Activated CD4-positive, alpha-beta T cell treated with anti-CD3 and anti-CD28 coated beads, Interleukin-2, amount 10 ng/mL, durations not matched to agents 24 days and 14 days (primary cell): ENCODE measurements at regions of chr11 and their contacts with region 1.

Region 1: DNA sequence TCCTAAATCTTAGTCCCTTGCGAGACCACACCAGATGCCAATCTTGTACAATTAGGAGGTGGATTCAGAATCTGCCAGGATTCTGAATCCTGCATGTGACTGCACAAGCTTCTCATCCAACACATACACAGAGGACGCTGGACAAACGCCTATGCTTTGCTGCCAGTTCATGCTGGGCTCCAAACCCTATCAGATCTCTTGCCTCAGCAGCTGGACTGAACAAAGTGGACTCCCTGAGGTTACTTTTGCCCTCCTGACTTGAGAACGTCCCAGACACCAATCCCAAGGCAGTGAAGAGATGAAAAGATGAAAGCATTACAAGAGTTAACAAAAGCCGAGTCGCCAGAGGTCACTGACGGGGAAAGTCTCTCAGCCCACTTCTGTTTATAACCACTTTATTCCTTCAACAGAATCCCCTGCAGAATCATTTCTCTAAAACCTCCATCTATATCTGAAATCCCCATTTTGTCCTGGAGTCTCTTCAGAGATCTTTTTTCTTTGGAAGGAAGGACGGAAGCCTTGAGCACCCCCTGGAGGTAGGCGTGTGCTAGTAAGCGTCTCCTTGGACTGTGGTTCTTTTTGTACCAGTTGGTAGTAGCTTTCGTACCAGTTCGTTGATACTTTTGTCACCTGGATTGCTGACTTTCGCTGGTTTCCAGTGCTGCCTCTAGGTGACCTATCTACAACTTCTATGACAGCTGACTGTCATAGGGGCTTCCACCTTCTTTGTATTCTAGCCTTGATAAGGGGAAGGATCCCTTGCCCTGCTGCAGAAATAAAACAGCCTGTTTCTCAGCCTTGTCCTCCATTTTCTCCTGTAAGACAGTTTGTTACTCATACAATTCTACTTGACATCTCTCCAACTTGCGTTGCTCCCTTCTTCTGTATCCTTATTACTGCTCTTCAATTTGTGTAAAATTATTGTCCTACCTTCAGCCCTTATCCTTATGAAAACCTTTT is 26.1 kb upstream of the EED start:
- DNase-seq: peak; percentile 89
- H3K4me3 Mint-ChIP-seq: peak overlapping the region; percentile 70
- H3K27ac Mint-ChIP-seq: peak overlapping the region; percentile 84
- H3K4me1 Mint-ChIP-seq: peaks cover 59% of the 10 kb centered on the region
- H3K27me3 Mint-ChIP-seq: no peaks in the 10 kb centered on the region

Region 2: GRCh38 chr11:85663753-85664614 is 554.4 kb before region 1 on chr11:
- intact Hi-C with region 1: no loop called
- DNase-seq: peak; percentile 97
- H3K4me3 Mint-ChIP-seq: peak overlapping the region; percentile 97
- H3K27ac Mint-ChIP-seq: peak overlapping the region; percentile 99
- H3K4me1 Mint-ChIP-seq: peaks cover 33% of the 10 kb centered on the region
- H3K27me3 Mint-ChIP-seq: peaks cover 2% of the 10 kb centered on the region

Region 3: DNA sequence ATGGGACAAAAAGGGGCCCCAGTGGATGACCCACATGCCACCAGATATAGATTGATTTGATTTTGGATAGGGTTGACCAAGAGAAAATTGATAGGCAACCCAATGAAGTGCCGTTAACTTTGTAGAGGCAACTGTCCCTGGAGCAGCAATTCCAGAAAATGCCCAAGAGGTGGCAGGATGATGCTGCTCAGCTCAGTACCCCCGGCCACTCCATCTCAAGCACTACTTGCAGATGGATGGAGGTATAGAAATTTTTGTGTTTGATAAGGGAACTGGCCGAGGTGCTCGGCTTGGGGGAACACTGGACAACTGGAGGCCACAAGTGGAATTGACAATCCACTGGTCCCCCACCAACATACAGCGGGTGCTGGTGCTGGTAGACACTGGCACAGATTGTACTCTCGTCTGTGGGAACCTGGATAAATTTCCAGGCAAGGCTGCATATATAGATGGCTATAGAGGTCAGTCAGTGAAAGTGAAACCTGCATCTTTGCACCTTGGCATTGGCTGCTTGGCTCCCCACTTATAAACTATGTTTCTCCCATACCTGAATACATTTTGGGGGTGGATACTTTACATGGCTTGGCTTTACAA is 276.9 kb before region 1 on chr11:
- intact Hi-C with region 1: loop called (anchors 2 kb)
- DNase-seq: peak; percentile 77
- H3K4me3 Mint-ChIP-seq: no peak overlapping the region
- H3K27ac Mint-ChIP-seq: no peak overlapping the region
- H3K4me1 Mint-ChIP-seq: peaks cover 13% of the 10 kb centered on the region
- H3K27me3 Mint-ChIP-seq: no peaks in the 10 kb centered on the region

Region 4: DNA sequence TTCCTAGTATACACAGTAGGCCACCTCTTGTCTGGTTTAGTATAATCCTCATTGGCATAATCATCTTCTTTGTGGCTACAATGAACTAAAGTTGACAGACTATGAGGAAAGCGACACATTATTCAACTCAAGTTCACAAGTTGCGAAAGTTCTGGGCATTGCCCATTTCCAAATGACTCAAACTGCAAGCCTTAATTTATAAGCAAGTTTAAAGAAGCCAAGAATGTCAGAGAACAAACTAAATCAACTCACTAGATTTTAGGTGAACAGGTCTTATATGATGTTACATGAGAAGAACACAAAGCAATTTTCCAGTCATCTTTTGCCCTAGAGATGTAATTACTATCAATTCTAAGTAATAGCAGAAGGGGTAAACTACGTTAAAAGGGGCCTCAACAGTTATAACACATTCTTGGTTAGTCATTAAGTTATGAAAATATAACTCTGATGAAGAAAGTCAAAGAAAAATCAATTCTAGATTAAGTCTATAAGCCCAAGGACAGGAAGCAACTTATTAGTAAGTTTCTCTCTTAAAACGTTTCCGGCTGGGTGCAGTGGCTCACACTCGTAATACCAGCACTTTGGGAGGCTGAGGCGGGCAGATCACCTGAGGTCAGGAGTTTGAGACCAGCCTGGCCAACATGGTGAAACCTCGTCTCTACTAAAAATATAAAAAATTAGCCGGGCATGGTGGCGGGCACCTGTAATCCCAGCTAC is 171.0 kb before region 1 on chr11:
- intact Hi-C with region 1: loop called (anchors 1 kb)
- DNase-seq: peak; percentile 64
- H3K4me3 Mint-ChIP-seq: peak overlapping the region; percentile 57
- H3K27ac Mint-ChIP-seq: peak overlapping the region; percentile 96
- H3K4me1 Mint-ChIP-seq: peaks cover 72% of the 10 kb centered on the region
- H3K27me3 Mint-ChIP-seq: no peaks in the 10 kb centered on the region

Region 5: DNA sequence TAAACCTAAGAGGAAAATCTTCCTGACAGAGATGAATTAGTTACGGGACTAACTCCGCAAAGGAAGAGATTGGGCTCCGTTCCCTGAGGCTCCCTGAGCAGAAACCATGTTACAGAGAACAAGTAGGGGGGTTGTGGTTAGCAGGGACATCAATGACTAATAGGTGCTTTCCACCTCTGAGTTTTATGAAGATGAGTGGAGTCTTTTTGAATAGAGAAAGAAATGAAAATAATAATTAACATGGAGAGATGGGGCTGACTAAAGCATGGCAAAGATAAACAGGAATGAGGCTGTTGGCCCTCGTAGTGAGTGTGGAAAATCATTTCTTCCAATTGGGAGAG is 102.0 kb before region 1 on chr11:
- intact Hi-C with region 1: loop called (anchors 1 kb)
- DNase-seq: peak; percentile 70
- H3K4me3 Mint-ChIP-seq: peak overlapping the region; percentile 24
- H3K27ac Mint-ChIP-seq: peak overlapping the region; percentile 69
- H3K4me1 Mint-ChIP-seq: peaks cover 30% of the 10 kb centered on the region
- H3K27me3 Mint-ChIP-seq: peaks cover 2% of the 10 kb centered on the region

Region 6: GRCh38 chr11:86202013-86202336 is 16.4 kb before region 1 on chr11:
- intact Hi-C with region 1: loop called (anchors 1 kb)
- DNase-seq: peak; percentile 70
- H3K4me3 Mint-ChIP-seq: no peak overlapping the region
- H3K27ac Mint-ChIP-seq: no peak overlapping the region
- H3K4me1 Mint-ChIP-seq: peaks cover 14% of the 10 kb centered on the region
- H3K27me3 Mint-ChIP-seq: no peaks in the 10 kb centered on the region

Region 7: DNA sequence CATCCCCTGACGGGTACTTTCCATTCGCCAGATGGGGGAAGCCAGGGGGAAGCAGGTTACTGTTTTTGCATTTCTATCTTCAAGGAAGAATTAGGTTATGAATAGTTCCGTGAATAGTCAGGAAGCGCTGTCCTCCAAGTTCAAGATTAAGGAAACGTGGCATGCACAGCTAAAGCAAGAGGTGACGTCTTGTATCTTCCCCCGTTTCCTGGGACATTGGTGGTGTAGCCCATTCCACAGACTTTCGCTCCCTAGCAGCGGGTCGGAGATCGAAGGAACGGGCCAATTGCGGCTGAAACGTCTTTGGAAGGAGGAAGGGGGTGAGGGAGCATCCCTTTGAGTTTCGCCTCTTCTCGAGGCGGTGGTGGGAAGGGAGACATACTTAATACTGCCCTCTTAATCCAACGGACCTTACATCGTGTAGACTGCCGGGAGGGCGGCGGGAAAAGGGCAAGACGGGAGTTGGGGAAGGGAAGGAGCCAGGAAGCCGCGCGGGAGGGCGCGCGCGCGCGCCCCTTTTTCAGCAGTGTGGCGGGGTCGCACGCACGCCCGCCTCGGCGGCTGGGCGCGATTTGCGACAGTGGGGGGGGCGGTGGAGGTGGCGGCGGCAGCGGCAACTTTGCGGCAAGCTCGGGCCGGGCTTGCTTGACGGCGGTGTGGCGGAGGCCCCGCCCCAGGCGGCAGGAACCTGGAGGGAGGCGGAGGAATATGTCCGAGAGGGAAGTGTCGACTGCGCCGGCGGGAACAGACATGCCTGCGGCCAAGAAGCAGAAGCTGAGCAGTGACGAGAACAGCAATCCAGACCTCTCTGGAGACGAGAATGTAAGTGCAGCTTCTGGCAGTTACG is 26.3 kb after region 1 on chr11 and contains the start of gene EED:
- intact Hi-C with region 1: loop called (anchors 1 kb)
- DNase-seq: peak; percentile 98
- H3K4me3 Mint-ChIP-seq: no peak within 1 kb of the TSS
- H3K27ac Mint-ChIP-seq: no peak within 1 kb of the TSS
- H3K4me1 Mint-ChIP-seq: peaks cover 34% of the 10 kb centered on the region
- H3K27me3 Mint-ChIP-seq: no peaks in the 10 kb centered on the region
- total RNA-seq, gene EED: 269 TPM in 2 replicates

Region 8: DNA sequence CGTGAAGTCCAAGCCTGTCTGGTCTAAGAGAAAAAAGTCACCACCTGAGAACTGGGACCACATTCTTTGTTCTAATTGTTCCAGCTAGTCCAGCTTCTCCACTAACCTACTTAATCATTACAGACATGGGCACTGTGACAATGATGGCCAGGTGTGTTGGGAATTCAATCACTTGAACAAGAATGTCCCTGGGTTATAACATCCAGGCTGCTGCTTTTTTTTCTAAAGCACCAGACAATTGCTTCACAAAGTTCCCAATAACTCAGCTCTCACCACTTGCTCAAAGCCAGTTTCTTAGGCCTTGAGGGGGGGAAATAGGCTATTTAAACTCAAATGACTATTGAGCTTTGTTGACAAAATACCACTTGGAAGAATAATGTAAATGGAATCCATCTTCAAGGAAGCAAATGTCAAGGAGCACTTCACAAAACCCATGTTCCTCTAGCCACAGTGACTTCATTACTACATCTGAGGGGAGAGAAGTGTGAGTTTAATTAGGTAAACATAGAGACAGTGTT is 373.7 kb after region 1 on chr11:
- intact Hi-C with region 1: no loop called
- DNase-seq: no peak
- H3K4me3 Mint-ChIP-seq: no peak overlapping the region
- H3K27ac Mint-ChIP-seq: peak overlapping the region; percentile 90
- H3K4me1 Mint-ChIP-seq: peaks cover 49% of the 10 kb centered on the region
- H3K27me3 Mint-ChIP-seq: no peaks in the 10 kb centered on the region

Region 9: DNA sequence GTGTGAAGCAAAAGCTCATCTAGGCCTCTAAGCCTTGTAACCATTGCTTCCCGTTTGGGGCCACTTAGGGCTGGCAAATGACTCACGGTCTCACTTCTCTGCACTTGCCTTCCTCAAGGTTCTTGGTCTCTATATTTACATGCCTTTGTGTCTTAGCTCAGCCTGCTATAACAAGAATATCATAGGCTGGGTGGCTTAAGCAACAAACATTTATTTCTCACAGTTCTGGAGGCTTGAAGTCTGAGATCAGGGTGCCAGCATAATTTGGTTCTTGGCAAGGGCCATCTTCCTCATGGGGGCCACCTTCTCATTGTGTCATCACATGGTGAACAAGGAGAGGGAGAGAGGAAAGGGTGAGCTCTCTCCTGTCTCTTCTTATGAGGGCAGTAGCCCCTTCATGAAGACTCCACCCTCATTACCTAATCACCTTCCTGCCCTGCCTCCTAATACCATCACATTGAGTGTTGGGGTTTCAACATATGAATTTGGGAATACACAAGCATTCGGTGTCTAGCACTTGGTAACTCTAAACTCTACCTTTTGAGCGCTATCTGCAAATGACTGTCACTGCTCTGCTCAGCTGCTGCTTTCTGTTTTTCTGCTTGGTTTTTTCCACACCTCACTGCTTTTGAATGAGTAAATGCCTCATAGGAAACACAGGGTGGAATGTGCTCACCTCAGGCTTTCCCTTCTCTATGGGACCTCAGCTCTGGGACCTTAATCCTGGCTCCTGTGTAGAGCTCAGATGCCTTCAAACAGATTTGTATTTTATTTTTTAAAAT is 470.2 kb after region 1 on chr11:
- intact Hi-C with region 1: loop called (anchors 10 kb)
- DNase-seq: peak; percentile 63
- H3K4me3 Mint-ChIP-seq: peak overlapping the region; percentile 43
- H3K27ac Mint-ChIP-seq: peak overlapping the region; percentile 87
- H3K4me1 Mint-ChIP-seq: peaks cover 16% of the 10 kb centered on the region
- H3K27me3 Mint-ChIP-seq: no peaks in the 10 kb centered on the region